ENCODE measurements at regions of chr11 and their contacts with region 1.

Region 1: DNA sequence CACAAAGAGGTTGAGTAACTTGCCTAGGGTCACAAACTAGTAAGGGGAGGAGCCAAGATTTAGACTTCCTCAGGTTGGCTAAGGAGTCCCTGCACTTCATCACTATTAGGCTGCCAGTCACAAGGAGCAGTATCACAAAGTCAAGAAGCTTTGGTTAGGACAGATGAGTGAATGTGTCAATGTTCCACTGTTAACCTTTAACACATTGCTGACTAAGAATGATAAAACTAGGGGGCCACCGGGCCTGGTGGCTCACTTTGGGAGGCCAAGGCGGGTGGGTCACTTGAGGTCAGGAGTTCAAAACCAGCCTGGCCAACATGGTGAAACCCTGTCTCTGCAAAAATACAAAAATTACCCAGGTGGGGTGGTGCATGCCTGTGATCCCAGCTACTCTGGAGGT is 32.0 kb downstream of the TMEM123 start:
- DNase-seq: peak; percentile 40
- ATAC-seq: peak; percentile 83
- H3K4me3 ChIP-seq: no peak overlapping the region
- H3K27ac ChIP-seq: no peak overlapping the region
- H3K4me1 ChIP-seq: peaks cover 4% of the 10 kb centered on the region; the same call in 1 of the 2 replicates
- H3K27me3 ChIP-seq: no peaks in the 10 kb centered on the region
- CTCF ChIP-seq: no peak
- EP300 ChIP-seq: no peak
- POLR2A ChIP-seq: no peak
- RAD21 ChIP-seq: no peak

Region 2: GRCh38 chr11:102410382-102410784 is 10.2 kb before region 1 on chr11:
- CTCF ChIA-PET with region 1: interaction called, 7 read pairs
- POLR2A ChIA-PET with region 1: interaction called, 9 read pairs
- RAD21 ChIA-PET with region 1: interaction called, 5 read pairs
- SMC1A ChIA-PET with region 1: interaction called, 15 read pairs
- in situ Hi-C with region 1: no loop called
- intact Hi-C with region 1: no loop called
- DNase-seq: no peak
- ATAC-seq: no peak
- H3K4me3 ChIP-seq: no peak overlapping the region
- H3K27ac ChIP-seq: no peak overlapping the region
- H3K4me1 ChIP-seq: no peaks in the 10 kb centered on the region
- H3K27me3 ChIP-seq: no peaks in the 10 kb centered on the region
- CTCF ChIP-seq: no peak
- EP300 ChIP-seq: no peak
- POLR2A ChIP-seq: no peak
- RAD21 ChIP-seq: no peak

Measured in GM12878 (cell line).